ENCODE measurements at regions of chr10 and their contacts with region 1.

Region 1: GRCh38 chr10:119368991-119369869 is 161.9 kb downstream of the GRK5 start:
- DNase-seq: no peak

Region 2: GRCh38 chr10:119281581-119282071 is 87.6 kb before region 1 on chr10:
- intact Hi-C with region 1: loop called (anchors 5 kb)
- DNase-seq: no peak

Region 3: GRCh38 chr10:119395280-119395989 is 26.2 kb after region 1 on chr10:
- intact Hi-C with region 1: no loop called
- DNase-seq: no peak

Region 4: DNA sequence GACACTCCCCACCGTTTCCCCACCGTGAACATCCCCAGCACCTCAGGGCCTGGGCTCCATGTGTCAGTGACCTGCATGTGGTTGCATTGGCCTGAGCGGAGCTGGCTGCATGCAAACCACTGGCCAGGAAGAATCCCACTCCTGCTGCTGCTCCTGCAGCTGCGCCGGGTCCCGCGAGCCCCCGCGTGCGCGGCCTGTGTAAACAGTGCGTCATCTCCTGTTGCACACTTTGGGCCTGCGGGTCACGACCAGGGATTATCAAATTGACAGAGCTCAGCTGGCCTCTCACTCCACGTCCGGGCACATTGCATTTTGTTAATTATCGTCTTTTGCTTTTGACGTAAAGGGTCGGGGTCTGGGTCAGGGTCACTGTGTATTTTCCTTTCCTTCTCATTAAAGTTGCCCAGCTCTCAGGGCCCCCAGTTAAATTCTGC is 40.7 kb after region 1 on chr10:
- intact Hi-C with region 1: loop called (anchors 2 kb)
- DNase-seq: peak; percentile 85

Measured in cardiac septum (tissue), 1 donor.